Common myeloid progenitor, CD34-positive (primary cell): ENCODE measurements at regions of chr1 and their contacts with region 1.

Region 1: GRCh38 chr1:161139765-161140164 is 7.3 kb upstream of the DEDD start:
- DNase-seq: peak; percentile 69 to 84 (median 74)
- H3K4me3 ChIP-seq: no peak overlapping the region
- H3K27ac ChIP-seq: no peak overlapping the region
- H3K4me1 ChIP-seq: peaks cover 0 to 12% (median 0%) of the 10 kb centered on the region in 4 experiments
- H3K27me3 ChIP-seq: no peaks in the 10 kb centered on the region

Region 2: DNA sequence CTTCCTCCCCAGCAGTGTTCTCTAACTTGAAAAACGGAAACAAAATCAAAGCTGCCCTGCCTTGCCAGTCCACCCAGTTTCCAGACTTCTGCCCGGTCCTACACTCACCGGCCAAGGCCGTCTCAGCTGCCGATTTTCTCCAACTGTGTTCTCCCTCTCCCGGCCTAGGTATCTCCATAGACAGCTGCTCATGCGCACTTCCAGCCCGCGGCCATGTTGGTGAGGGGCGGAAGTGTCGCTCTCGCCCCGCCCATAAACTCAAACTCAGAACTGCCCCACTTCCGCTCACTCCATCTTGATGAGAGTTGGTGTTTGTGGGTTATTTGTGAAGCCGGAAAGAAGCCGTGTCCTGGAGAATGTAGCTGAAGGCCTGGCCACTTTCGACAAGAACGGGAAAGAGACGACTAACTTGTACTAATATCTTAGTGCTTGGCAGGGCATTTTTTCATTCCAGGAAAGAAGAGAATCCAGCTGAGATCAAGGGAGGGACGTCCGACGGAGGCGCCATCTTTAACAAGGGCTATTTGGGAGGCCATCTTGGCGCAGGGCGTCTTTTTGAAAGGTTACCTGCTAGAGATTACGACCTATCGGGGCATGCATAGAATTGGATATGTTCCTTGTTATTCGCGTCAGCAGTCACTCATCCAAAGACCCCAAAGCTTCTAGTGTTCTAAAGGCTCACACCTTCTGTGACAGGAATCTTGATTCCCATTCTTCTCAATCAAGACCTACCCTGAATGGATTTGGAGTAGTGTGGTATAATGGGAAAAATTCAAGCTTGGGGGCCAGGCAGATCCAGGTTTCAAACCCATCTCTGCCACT is 93.8 kb before region 1 on chr1 and contains the start of gene USF1:
- CTCF ChIA-PET with region 1: interaction called, 13 read pairs
- POLR2A ChIA-PET with region 1: no interaction called
- DNase-seq: peak; percentile 97 to 98 (median 98)
- H3K4me3 ChIP-seq: peak within 1 kb of the TSS; percentile 75 to 97 (median 91)
- H3K27ac ChIP-seq: peak within 1 kb of the TSS; percentile 95 to 97
- H3K4me1 ChIP-seq: peaks cover 8 to 31% (median 20%) of the 10 kb centered on the region in 4 experiments
- H3K27me3 ChIP-seq: no peaks in the 10 kb centered on the region

Region 3: GRCh38 chr1:161117759-161118581 is 21.8 kb before region 1 on chr1 and contains the starts of genes NIT1 and PFDN2:
- CTCF ChIA-PET with region 1: interaction called, 16 read pairs
- POLR2A ChIA-PET with region 1: interaction called, 6 read pairs
- DNase-seq: peak; percentile 85 to 93 (median 88)
- H3K4me3 ChIP-seq: peak within 1 kb of the TSS; percentile 66 to 100 (median 97)
- H3K27ac ChIP-seq: peak within 1 kb of the TSS; percentile 78 to 93
- H3K4me1 ChIP-seq: peaks cover 33 to 78% (median 60%) of the 10 kb centered on the region in 4 experiments
- H3K27me3 ChIP-seq: no peaks in the 10 kb centered on the region

Region 4: DNA sequence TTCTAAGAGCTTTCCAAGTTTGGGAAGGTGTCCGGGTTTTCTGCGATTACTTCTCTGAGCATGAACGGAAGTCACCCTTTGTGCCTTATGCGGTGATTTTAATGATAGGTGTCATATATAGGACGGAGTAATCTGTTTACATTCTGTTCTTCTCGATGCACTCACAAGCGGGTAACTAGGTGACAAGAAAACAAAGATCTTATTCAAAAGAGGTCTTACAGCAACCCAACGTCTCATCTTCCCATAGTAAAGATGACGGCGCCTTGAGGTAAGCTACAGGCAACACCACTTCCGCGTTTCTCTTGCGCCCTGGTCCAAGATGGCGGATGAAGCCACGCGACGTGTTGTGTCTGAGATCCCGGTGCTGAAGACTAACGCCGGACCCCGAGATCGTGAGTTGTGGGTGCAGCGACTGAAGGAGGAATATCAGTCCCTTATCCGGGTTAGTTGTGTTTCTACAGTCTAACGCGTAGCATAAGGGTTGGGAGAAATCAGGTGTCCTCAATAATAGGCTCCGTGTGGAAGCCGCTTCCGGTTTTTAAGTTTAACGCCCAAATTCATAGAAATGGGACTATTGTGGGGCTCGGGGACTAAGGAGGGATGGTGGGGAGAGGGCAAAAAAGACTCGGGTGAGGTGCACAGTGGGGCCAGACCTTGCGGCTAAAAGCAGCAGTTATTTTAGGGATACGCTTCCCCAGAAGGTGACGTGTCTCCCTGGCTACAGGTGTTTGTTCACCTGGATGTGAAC is 14.1 kb after region 1 on chr1 and contains the start of gene UFC1:
- CTCF ChIA-PET with region 1: interaction called, 29 read pairs
- POLR2A ChIA-PET with region 1: no interaction called
- DNase-seq: peak; percentile 94 to 97 (median 95)
- H3K4me3 ChIP-seq: peak within 1 kb of the TSS; percentile 63 to 99 (median 96)
- H3K27ac ChIP-seq: peak within 1 kb of the TSS; percentile 98
- H3K4me1 ChIP-seq: peaks cover 2 to 19% (median 17%) of the 10 kb centered on the region in 4 experiments
- H3K27me3 ChIP-seq: no peaks in the 10 kb centered on the region

Region 5: GRCh38 chr1:161244888-161245287 is 105.1 kb after region 1 on chr1:
- CTCF ChIA-PET with region 1: no interaction called
- POLR2A ChIA-PET with region 1: no interaction called
- DNase-seq: no peak
- H3K4me3 ChIP-seq: no peak overlapping the region
- H3K27ac ChIP-seq: no peak overlapping the region
- H3K4me1 ChIP-seq: peaks cover 2 to 15% (median 5%) of the 10 kb centered on the region in 4 experiments
- H3K27me3 ChIP-seq: no peaks in the 10 kb centered on the region